BJ (cell line): ENCODE measurements at regions of chr10 and their contacts with region 1.

Region 1: GRCh38 chr10:69957886-69958555 is 94.6 kb upstream of the MACROH2A2 start:
- DNase-seq: no peak
- H3K4me3 ChIP-seq: no peak overlapping the region
- H3K27me3 ChIP-seq: no peaks in the 10 kb centered on the region; the same call in 1 of the 2 replicates
- CTCF ChIP-seq: peak; percentile 91

Region 2: GRCh38 chr10:69644658-69645295 is 313.2 kb before region 1 on chr10:
- CTCF ChIA-PET with region 1: interaction called, 13 read pairs
- POLR2A ChIA-PET with region 1: no interaction called
- DNase-seq: no peak
- H3K4me3 ChIP-seq: no peak overlapping the region
- H3K27me3 ChIP-seq: peaks cover 6% of the 10 kb centered on the region
- CTCF ChIP-seq: peak; percentile 81

Region 3: GRCh38 chr10:69819716-69820506 is 138.1 kb before region 1 on chr10:
- CTCF ChIA-PET with region 1: no interaction called
- POLR2A ChIA-PET with region 1: no interaction called
- DNase-seq: no peak
- H3K4me3 ChIP-seq: no peak overlapping the region
- H3K27me3 ChIP-seq: no peaks in the 10 kb centered on the region
- CTCF ChIP-seq: no peak

Region 4: GRCh38 chr10:69929575-69929974 is 28.4 kb before region 1 on chr10:
- CTCF ChIA-PET with region 1: interaction called, 10 read pairs
- POLR2A ChIA-PET with region 1: no interaction called
- DNase-seq: no peak
- H3K4me3 ChIP-seq: no peak overlapping the region
- H3K27me3 ChIP-seq: no peaks in the 10 kb centered on the region
- CTCF ChIP-seq: no peak

Region 5: DNA sequence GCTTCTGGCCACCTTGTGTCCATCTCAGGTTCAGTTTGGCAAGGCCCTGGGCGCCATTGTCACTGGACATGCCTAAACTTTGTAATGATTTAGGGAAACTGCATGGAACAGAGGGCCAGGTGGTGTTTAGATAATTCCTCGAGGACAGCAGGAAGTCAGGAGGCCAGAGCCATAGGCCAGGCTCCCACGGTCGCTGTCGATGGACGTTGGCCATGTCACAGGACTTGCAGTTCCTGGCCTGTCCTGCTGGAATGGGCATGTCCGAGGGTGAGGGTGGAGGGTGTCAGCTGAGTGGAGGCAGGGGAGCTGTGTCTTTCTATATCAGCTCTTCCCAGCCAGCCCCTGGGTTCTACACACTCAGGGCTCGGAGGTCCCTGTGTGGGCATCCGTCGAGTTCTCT is 13.3 kb before region 1 on chr10:
- CTCF ChIA-PET with region 1: interaction called, 24 read pairs
- POLR2A ChIA-PET with region 1: no interaction called
- DNase-seq: no peak
- H3K4me3 ChIP-seq: no peak overlapping the region
- H3K27me3 ChIP-seq: no peaks in the 10 kb centered on the region
- CTCF ChIP-seq: no peak

Region 6: DNA sequence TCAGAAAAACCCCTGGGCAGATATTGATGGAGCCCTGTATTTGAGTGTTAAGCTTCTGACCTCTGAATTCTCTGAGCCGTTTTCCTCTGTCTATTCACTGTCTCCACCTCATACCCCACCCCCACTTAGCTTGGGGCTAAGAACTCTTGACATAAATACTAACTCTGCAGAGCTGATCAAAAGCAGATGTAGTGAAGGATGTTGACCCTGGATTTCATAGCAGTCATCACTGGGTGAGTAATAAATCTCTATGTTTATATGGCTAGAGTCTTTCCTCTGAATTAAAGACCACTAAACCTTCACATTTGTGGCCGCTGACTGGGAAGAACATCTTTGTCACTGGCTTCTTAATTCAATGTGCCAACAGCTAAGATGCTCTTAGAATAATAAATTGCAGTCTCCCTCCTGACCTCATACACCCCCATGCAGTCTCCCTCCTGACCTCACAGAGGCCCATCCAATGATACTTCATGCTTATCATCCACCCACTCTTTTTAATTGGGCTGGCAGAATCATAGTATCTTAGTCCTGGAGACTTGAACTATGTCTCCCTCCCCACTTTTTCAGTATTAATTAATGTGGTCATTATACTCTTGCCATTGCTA is 16.6 kb after region 1 on chr10:
- CTCF ChIA-PET with region 1: interaction called, 33 read pairs
- POLR2A ChIA-PET with region 1: no interaction called
- DNase-seq: peak; percentile 97
- H3K4me3 ChIP-seq: no peak overlapping the region
- H3K27me3 ChIP-seq: peaks cover 12% of the 10 kb centered on the region
- CTCF ChIP-seq: no peak